Calu3 (cell line): ENCODE measurements at regions of chr3 and their contacts with region 1.

Region 1: GRCh38 chr3:12484198-12484974 is at the start of gene TSEN2:
- DNase-seq: peak; percentile 96
- H3K4me3 Mint-ChIP-seq: peak within 1 kb of the TSS; percentile 83
- H3K27ac Mint-ChIP-seq: peak within 1 kb of the TSS; percentile 69
- H3K4me1 Mint-ChIP-seq: peaks cover 51% of the 10 kb centered on the region
- H3K27me3 Mint-ChIP-seq: no peaks in the 10 kb centered on the region
- CTCF ChIP-seq: no peak
- total RNA-seq, gene TSEN2: 26.7 and 32.0 TPM in 2 replicates

Region 2: GRCh38 chr3:12175844-12176453 is 308.4 kb before region 1 on chr3:
- CTCF ChIA-PET with region 1: interaction called, 6 read pairs
- intact Hi-C with region 1: loop called (anchors 5 kb)
- DNase-seq: peak; percentile 77
- H3K4me3 Mint-ChIP-seq: no peak overlapping the region
- H3K27ac Mint-ChIP-seq: no peak overlapping the region
- H3K4me1 Mint-ChIP-seq: peaks cover 18% of the 10 kb centered on the region
- H3K27me3 Mint-ChIP-seq: no peaks in the 10 kb centered on the region
- CTCF ChIP-seq: peak; percentile 61

Region 3: GRCh38 chr3:12308517-12308916 is 175.9 kb before region 1 on chr3:
- CTCF ChIA-PET with region 1: interaction called, 4 read pairs
- intact Hi-C with region 1: loop called (anchors 5 kb)
- DNase-seq: peak; percentile 46
- H3K4me3 Mint-ChIP-seq: peak overlapping the region; percentile 56
- H3K27ac Mint-ChIP-seq: peak overlapping the region; percentile 92
- H3K4me1 Mint-ChIP-seq: peaks cover 47% of the 10 kb centered on the region
- H3K27me3 Mint-ChIP-seq: no peaks in the 10 kb centered on the region
- CTCF ChIP-seq: no peak

Region 4: DNA sequence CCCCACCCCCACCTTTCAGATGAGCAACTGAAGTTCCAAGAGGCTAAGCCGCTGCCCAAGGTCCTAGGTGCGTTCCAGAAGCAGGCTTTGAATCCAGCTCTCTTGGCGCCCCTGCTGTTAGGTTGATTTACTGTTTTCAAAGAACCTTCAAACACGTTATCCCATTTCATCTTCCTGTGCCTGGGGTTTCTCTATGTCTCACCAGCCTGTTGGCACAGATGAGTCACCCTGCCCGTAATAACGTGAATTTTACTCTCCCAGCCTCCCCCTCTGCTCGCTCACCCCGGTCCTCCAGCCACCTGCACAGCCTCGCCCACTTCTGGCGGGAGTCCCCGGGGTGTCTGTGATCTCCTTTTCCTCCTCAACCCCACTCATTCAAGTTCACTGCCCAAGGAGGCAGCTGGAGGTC is 13.1 kb before region 1 on chr3:
- CTCF ChIA-PET with region 1: interaction called, 13 read pairs
- intact Hi-C with region 1: no loop called
- DNase-seq: peak; percentile 75
- H3K4me3 Mint-ChIP-seq: peak overlapping the region; percentile 39
- H3K27ac Mint-ChIP-seq: peak overlapping the region; percentile 83
- H3K4me1 Mint-ChIP-seq: peaks cover 38% of the 10 kb centered on the region
- H3K27me3 Mint-ChIP-seq: no peaks in the 10 kb centered on the region
- CTCF ChIP-seq: no peak

Region 5: DNA sequence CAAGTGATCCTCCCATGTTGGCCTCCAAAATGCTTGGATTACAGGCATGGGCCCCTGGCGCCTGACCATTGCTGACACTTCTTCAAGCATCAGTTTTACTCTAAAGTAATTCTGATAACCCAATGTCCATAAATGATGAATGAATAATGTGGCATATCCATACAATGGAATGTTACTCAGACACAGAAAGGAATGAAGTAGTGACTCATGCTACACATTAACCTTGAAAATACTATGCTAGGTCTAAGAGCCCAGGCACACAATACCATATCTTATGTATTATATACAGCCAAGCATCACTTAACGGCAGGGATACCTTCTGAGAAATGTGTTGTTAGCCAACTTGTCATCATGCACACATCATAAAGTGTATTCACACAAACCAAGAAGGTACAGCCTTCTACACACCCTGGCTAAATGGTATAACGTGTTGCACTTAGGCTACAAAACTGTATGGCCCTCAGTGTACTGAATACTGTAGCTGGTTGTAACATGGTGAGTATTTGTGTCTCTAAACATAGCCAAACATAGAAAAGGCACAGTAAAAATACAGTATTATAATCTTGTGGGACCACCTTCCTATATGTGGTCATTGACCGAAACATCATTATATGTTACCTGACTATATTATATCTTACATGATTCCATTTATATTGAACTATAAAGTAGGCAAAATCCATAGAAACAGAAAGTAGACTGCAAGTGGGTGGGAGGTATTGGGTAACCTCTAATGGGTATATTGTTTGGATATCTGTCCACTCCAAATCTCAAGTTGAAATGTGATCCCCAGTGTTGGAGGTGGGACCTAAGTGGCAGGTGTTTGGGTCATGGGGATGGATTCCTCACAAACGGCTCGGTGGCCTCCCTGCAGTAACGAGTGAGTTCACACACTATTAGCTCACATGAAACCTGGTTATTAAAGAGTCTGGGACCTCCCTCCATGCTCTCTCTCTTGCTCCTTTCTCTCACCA is 103.9 kb after region 1 on chr3:
- CTCF ChIA-PET with region 1: no interaction called
- intact Hi-C with region 1: no loop called
- DNase-seq: no peak
- H3K4me3 Mint-ChIP-seq: no peak overlapping the region
- H3K27ac Mint-ChIP-seq: no peak overlapping the region
- H3K4me1 Mint-ChIP-seq: peaks cover 7% of the 10 kb centered on the region
- H3K27me3 Mint-ChIP-seq: no peaks in the 10 kb centered on the region
- CTCF ChIP-seq: no peak